ENCODE measurements at regions of chr12 and their contacts with region 1.

Region 1: GRCh38 chr12:6662906-6663742 is at the start of gene ING4:
- DNase-seq: peak; percentile 99
- H3K4me3 Mint-ChIP-seq: peak within 1 kb of the TSS; percentile 98
- H3K27ac Mint-ChIP-seq: peak within 1 kb of the TSS; percentile 96
- H3K4me1 Mint-ChIP-seq: peaks cover 21% of the 10 kb centered on the region
- H3K27me3 Mint-ChIP-seq: peaks cover 2% of the 10 kb centered on the region
- total RNA-seq, gene ING4: 13.7 and 15.8 TPM in 2 replicates

Region 2: DNA sequence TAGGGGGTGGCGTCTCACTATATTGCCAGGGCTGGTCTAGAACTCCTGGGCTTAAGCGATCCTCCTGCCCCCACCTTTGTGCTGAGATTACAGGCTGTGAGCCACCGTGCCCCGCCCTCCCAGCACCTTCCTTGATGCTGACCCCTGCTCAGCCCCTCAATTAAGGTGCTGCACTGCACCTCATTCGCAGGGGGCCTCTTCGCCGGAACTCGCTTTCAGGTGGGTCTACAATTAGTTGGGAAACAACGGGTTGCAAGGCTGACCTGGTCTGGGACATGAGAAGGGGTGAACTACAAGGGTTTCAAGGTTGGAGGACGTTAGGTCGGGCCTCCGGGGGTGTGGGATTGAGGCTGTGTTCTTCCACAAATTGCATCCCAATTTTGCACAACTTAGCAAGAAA is 93.8 kb before region 1 on chr12:
- intact Hi-C with region 1: loop called (anchors 2 kb)
- DNase-seq: no peak
- H3K4me3 Mint-ChIP-seq: peak overlapping the region; percentile 98
- H3K27ac Mint-ChIP-seq: no peak overlapping the region
- H3K4me1 Mint-ChIP-seq: peaks cover 28% of the 10 kb centered on the region
- H3K27me3 Mint-ChIP-seq: no peaks in the 10 kb centered on the region

Region 3: GRCh38 chr12:6592087-6592486 is 71.0 kb before region 1 on chr12:
- intact Hi-C with region 1: no loop called
- DNase-seq: no peak
- H3K4me3 Mint-ChIP-seq: no peak overlapping the region
- H3K27ac Mint-ChIP-seq: peak overlapping the region; percentile 4
- H3K4me1 Mint-ChIP-seq: peaks cover 11% of the 10 kb centered on the region
- H3K27me3 Mint-ChIP-seq: no peaks in the 10 kb centered on the region

Region 4: DNA sequence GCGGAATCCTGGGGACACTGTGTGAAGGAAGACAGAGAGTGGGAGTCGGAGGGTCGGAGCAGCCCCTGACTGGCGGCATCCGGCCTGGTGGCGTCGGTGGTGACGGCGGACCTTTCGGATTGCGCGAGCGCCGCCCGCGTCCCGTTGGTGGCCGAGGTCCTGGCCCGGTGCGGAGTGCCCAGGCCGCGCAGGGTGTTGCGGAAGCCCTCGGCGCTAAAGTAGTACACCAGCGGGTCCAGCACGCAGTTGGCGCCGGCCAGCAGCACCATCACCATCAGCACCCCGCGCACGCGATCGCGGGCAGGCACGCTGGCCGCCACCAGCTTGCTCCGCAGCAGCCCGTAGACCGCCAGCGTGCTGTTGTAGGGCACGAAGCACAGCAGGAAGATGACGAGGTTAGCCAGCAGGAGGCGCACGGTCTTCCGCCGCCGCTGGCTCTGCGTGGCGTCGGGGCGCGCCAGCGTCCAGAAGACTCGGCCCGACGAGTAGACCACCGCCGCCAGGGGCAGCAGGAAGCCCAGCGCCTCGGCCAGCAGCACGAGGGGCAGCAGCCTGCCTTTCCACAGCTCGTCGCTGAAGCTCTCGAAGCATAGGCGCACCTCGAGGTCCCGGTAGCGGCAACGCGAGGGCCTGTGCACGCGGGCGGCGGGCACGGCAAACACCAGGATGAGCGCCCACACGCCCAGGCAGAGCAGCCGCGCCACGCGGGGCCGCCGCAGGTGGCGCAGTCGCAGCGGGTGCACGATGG is 42.8 kb before region 1 on chr12:
- intact Hi-C with region 1: loop called (anchors 1 kb)
- DNase-seq: peak; percentile 88
- H3K4me3 Mint-ChIP-seq: peak overlapping the region; percentile 60
- H3K27ac Mint-ChIP-seq: peak overlapping the region; percentile 42
- H3K4me1 Mint-ChIP-seq: peaks cover 4% of the 10 kb centered on the region
- H3K27me3 Mint-ChIP-seq: no peaks in the 10 kb centered on the region

Region 5: GRCh38 chr12:6676962-6677361 is 13.8 kb after region 1 on chr12:
- intact Hi-C with region 1: no loop called
- DNase-seq: no peak
- H3K4me3 Mint-ChIP-seq: no peak overlapping the region
- H3K27ac Mint-ChIP-seq: no peak overlapping the region
- H3K4me1 Mint-ChIP-seq: no peaks in the 10 kb centered on the region
- H3K27me3 Mint-ChIP-seq: no peaks in the 10 kb centered on the region

Region 6: DNA sequence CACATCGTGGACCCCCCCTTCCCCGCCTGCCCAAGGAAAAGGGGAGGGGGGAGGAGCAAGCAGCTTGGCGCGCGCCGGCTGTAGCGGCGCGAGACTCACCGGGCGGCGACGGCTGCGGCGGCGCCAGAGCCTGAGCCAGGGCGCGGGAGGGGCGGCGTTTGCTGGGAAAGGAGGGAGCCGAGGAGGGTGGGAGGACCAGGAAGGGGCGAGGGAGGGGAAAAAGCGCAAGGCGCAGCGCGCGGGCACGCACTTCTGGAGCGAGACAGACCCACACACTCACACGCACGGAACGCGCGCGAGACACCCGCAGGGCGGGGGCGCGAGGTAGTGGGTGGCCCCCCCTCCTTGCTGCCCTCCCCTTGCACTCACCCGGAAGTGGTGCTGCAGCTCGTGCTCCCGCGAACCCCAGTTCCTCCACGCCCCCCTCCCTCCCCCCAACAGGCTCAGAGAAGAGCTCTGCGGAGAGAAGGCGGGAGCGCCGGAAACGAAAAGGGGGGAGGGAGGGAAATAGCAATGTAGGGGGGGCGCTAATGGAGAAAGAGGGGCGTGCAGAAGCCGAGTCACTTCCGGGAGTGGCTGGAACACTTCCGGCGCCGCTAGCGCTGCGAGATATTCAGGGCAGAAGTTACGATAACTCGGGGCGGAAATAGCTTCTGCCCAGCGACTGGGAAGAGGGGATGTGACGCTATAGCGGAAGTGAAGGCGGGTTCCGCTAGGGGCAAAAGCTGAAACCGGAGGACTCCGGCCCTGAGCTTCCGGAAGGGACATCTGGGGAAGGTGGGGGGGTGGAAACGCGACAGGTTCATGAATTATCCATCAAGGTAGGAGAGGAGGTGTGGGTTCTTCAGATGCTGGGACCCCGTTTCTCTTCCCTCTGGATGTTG is 26.1 kb after region 1 on chr12 and contains the start of gene ZNF384:
- intact Hi-C with region 1: loop called (anchors 1 kb)
- DNase-seq: peak; percentile 98
- H3K4me3 Mint-ChIP-seq: peak within 1 kb of the TSS; percentile 96
- H3K27ac Mint-ChIP-seq: peak within 1 kb of the TSS; percentile 93
- H3K4me1 Mint-ChIP-seq: peaks cover 38% of the 10 kb centered on the region
- H3K27me3 Mint-ChIP-seq: no peaks in the 10 kb centered on the region
- total RNA-seq, gene ZNF384: 83.6 and 84.4 TPM in 2 replicates

Region 7: DNA sequence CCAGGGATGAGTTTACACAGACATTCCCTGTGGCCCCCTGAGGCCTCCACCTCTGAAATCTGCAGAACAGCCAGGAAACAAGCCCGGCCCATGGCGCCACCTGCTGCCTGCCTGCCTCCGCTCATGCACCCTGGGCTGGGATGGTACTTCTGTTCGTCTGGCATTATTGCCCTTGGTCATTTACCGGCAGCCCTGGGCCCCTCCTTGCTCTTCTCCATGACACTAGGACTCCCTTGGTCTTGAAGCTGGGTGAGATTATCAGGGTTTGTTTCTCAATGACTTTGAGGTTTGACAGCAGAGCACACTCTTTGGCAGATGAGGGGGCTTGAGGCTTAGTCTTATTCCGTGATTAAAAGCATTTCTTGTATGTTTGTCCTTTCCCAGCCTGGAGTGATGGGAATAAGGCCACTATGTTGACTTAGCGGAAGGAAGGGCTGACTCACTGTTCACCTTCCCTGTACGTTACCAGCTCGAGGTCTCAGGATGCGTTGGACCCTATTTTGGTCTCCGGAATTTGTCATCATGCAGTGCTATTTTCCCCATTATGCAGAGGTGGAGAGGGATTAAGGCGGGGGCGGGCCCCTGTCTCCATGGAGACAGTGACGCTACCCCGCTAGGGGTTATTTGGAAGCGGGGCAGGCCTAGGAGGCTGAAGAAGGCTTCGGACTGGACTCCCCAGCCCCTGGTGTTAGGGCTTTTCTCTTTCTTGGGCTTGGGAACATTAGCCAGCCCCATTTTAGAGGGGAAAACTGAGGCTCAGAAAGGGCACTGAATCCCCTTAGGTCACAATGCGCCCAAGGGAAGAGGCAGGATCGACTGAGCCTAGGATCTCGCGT is 525.7 kb after region 1 on chr12:
- intact Hi-C with region 1: loop called (anchors 5 kb)
- DNase-seq: peak; percentile 89
- H3K4me3 Mint-ChIP-seq: peak overlapping the region; percentile 93
- H3K27ac Mint-ChIP-seq: peak overlapping the region; percentile 96
- H3K4me1 Mint-ChIP-seq: peaks cover 22% of the 10 kb centered on the region
- H3K27me3 Mint-ChIP-seq: no peaks in the 10 kb centered on the region